PC-9 (cell line): ENCODE measurements at regions of chr6 and their contacts with region 1.

Region 1: DNA sequence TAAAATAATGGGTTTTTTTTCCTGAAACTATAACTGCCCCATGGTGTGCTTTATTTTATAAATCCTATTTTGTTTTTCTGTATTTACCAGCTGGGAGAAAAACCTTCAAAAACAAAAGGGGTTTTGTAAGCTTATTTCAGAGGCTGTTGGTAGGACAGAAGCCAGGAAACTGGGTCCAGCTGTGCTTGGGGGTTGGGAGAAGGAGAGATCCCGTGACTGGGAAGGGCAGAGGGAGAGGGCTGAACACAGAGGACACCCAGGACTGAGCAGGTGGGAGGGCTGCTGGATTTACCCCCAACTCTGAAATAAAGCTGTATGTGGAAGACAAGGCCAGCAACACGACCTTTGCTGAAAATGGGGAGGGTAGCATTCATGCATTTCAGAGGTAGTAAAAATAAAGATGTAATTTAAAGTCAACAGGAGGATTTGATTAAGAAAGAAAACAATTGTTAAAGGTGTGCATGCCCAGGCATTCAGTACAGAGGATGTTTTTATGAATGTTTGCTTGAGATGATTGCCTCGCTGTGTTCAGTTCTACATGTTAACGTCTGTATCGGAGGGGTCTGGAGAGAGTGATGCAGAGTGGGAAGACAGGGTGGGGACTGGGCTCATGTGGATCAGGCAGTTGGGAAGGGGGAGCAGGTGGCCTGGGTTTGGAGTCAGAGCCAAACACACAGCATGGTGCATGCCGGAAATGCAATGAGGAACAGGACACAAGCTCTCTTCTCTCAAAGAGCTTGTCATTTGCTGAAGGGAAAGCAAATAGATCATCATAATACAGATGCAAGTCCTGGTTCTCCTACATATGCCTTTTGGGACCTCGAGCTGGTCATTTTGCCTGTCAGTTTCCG is 21.4 kb downstream of the ARFGEF3 start:
- DNase-seq: no peak
- H3K4me3 ChIP-seq: no peak overlapping the region
- H3K27ac ChIP-seq: no peak overlapping the region
- H3K4me1 ChIP-seq: peaks cover 2% of the 10 kb centered on the region
- H3K27me3 ChIP-seq: no peaks in the 10 kb centered on the region
- CTCF ChIP-seq: no peak

Region 2: DNA sequence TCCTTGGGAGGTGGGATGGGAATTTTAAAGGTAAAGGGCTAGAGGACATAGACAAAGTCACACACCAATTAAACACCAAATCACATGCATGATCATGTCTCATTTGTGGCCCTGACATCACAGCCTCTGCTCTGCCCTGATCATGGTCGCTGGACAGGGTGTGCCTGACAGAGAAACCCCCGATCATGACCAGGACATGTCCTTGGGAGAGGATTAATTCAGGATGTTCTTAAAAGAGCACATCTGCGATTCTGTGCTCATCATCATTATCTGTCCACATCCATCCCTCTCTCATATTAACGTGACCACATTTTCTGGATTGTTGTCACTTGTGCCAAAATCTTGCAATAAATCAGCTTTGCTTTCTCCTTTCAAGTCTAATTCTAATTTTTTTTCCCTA is 42.8 kb after region 1 on chr6:
- CTCF ChIA-PET with region 1: no interaction called
- POLR2A ChIA-PET with region 1: interaction called, 11 read pairs
- intact Hi-C with region 1: no loop called
- DNase-seq: no peak
- H3K4me3 ChIP-seq: no peak overlapping the region
- H3K27ac ChIP-seq: no peak overlapping the region
- H3K4me1 ChIP-seq: peaks cover 36% of the 10 kb centered on the region
- H3K27me3 ChIP-seq: no peaks in the 10 kb centered on the region
- CTCF ChIP-seq: no peak

Region 3: DNA sequence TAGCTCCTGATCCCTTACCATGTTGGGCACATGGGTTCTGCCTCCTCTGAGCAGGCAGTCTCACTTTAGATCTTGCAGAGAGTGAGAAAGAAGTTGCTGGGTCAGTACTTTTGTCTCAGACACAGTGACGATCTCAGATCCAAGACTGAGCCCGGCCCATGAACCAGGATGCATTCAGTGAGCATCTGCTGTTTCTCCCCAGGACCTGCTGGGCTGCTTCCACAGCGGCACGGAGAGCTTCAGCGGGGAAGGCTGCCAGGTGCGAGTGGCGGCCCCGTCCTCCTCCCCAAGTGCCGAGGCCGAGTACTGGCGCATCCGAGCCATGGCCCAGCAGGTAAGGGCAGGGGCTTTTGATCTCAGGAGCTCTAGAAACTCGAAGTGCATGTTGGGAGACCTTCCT is 140.7 kb after region 1 on chr6:
- CTCF ChIA-PET with region 1: no interaction called
- POLR2A ChIA-PET with region 1: no interaction called
- intact Hi-C with region 1: no loop called
- DNase-seq: no peak
- H3K4me3 ChIP-seq: no peak overlapping the region
- H3K27ac ChIP-seq: no peak overlapping the region
- H3K4me1 ChIP-seq: no peaks in the 10 kb centered on the region
- H3K27me3 ChIP-seq: no peaks in the 10 kb centered on the region
- CTCF ChIP-seq: no peak